CD4-positive, alpha-beta memory T cell (primary cell): ENCODE measurements at regions of chr1 and their contacts with region 1.

Region 1: GRCh38 chr1:40862008-40862863 is at the start of gene CITED4:
- DNase-seq: peak; percentile 95
- H3K4me3 ChIP-seq: peak within 1 kb of the TSS; percentile 57 to 79
- H3K4me3 Mint-ChIP-seq: peak within 1 kb of the TSS; percentile 94 to 99 (median 98)
- H3K27ac ChIP-seq: peak within 1 kb of the TSS; percentile 63
- H3K27ac Mint-ChIP-seq: peak within 1 kb of the TSS; percentile 89 to 99 (median 98)
- H3K4me1 ChIP-seq: peaks cover 14% of the 10 kb centered on the region
- H3K4me1 Mint-ChIP-seq: peaks cover 7 to 15% (median 10%) of the 10 kb centered on the region in 4 donors
- H3K27me3 ChIP-seq: no peaks in the 10 kb centered on the region
- H3K27me3 Mint-ChIP-seq: peaks cover 0 to 4% of the 10 kb centered on the region in 2 donors
- total RNA-seq, gene CITED4: 8.1 to 8.4 TPM

Region 2: DNA sequence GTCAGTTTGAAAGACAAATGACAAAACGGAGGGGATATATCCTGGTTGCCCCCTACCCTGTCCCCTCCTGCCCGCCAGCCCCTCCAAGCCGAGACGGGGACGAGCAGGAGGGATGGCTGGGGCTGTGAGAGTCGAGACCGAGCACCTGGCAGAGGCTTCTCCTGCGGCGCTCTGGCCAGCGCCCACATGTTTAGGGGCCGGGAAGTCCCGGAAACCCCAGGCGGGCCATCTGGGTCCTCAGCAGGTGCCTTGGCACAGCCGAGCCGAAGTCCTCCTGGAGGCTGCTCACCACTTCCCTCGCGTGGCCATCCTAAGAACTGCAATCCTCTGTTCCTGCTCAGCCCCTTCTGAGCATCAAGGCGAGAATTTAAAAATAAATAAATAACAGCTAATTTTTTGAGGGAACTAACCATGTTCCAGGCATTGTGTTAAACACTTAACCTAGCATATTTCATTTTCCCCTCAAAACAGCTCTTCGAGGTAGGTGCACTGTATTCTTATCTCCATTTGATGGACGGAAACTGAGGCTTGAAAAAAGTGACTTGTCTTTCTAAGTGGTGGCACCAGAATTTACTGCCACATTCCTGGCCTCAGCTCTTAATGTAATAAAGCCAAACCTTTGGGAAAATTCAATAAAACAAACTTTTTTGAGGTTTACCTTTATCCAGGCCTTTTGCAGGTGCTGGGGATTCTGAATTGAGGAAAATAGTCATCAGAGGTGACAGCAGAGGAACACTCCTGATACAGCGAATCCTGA is 193.3 kb before region 1 on chr1:
- CTCF ChIA-PET with region 1: interaction called, 3 read pairs
- POLR2A ChIA-PET with region 1: no interaction called
- intact Hi-C with region 1: loop called (anchors 1 kb)
- DNase-seq: peak; percentile 73 to 78 (median 76)
- H3K4me3 ChIP-seq: peak overlapping the region in 1 of 2 donors; percentile 38
- H3K4me3 Mint-ChIP-seq: peak overlapping the region in 6 of 8 donors; percentile 10 to 78 (median 53)
- H3K27ac ChIP-seq: no peak overlapping the region
- H3K27ac Mint-ChIP-seq: no peak overlapping the region
- H3K4me1 ChIP-seq: peaks cover 21% of the 10 kb centered on the region
- H3K4me1 Mint-ChIP-seq: peaks cover 4 to 28% (median 13%) of the 10 kb centered on the region in 4 donors
- H3K27me3 ChIP-seq: no peaks in the 10 kb centered on the region
- H3K27me3 Mint-ChIP-seq: no peaks in the 10 kb centered on the region

Region 3: GRCh38 chr1:40774266-40774998 is 87.8 kb before region 1 on chr1:
- CTCF ChIA-PET with region 1: interaction called, 11 read pairs
- POLR2A ChIA-PET with region 1: interaction called, 5 read pairs
- intact Hi-C with region 1: no loop called
- DNase-seq: peak; percentile 42 to 53 (median 51)
- H3K4me3 ChIP-seq: no peak overlapping the region
- H3K4me3 Mint-ChIP-seq: no peak overlapping the region
- H3K27ac ChIP-seq: no peak overlapping the region
- H3K27ac Mint-ChIP-seq: peak overlapping the region in 1 of 7 donors; percentile 24
- H3K4me1 ChIP-seq: no peaks in the 10 kb centered on the region
- H3K4me1 Mint-ChIP-seq: peaks cover 0 to 2% (median 0%) of the 10 kb centered on the region in 4 donors
- H3K27me3 ChIP-seq: no peaks in the 10 kb centered on the region
- H3K27me3 Mint-ChIP-seq: no peaks in the 10 kb centered on the region

Region 4: DNA sequence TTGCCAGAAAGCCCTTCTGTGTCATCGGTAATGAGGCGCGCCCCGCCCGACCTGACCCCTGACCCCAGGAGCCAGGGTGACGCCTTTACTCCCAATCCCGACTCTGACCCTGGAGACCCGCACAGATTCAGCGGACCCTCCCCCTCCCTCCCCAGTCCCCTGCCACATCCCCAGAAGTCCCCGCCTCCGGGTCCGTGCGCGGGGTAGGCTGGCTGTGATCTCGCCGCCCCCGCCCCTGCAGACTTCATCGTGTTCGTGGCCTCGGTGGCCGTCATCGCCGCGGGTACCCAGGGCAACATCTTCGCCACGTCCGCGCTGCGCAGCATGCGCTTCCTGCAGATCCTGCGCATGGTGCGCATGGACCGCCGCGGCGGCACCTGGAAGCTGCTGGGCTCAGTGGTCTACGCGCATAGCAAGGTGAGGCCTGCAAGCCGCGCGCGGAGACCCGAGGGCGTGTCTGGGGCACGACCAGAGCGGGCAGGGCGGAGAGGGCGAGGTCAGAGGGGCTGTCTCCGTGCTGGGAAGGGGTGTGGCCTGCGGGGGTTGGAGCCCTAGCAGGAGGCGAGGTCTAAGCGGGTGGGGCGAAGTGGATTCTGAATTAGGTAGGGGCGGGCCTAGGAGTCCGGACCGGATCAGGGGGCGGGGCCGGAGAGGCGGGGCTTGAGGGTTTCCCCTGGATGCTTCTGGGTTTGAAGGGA is 43.8 kb before region 1 on chr1:
- CTCF ChIA-PET with region 1: no interaction called
- POLR2A ChIA-PET with region 1: interaction called, 9 read pairs
- intact Hi-C with region 1: loop called (anchors 1 kb)
- DNase-seq: peak; percentile 84 to 95 (median 90)
- H3K4me3 ChIP-seq: peak overlapping the region; percentile 2 to 62
- H3K4me3 Mint-ChIP-seq: peak overlapping the region; percentile 81 to 90 (median 83)
- H3K27ac ChIP-seq: peak overlapping the region; percentile 28
- H3K27ac Mint-ChIP-seq: peak overlapping the region; percentile 78 to 90 (median 83)
- H3K4me1 ChIP-seq: peaks cover 10% of the 10 kb centered on the region
- H3K4me1 Mint-ChIP-seq: peaks cover 0 to 15% (median 9%) of the 10 kb centered on the region in 4 donors
- H3K27me3 ChIP-seq: no peaks in the 10 kb centered on the region
- H3K27me3 Mint-ChIP-seq: no peaks in the 10 kb centered on the region

Region 5: DNA sequence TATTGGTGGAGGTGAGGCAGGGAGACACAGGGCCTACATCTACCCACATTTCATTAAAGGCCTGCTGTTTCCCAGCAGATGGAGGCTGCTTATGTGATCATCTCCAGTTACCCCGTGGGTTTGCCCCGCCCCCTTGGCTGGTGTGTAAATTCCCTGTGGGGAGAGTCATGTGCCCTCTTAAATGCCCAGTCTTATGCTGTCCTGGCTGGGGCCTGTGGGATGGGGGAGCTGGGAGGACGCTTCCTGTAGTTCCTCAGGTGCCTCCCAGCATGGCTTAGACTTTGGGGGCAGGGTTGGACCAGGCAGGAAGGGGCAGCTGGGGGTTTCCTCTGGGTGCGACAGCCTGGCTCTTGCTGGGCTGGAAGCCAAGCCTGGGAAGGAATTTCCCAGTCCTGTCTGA is 15.5 kb after region 1 on chr1:
- CTCF ChIA-PET with region 1: interaction called, 3 read pairs
- POLR2A ChIA-PET with region 1: interaction called, 46 read pairs
- intact Hi-C with region 1: loop called (anchors 1 kb)
- DNase-seq: no peak
- H3K4me3 ChIP-seq: no peak overlapping the region
- H3K4me3 Mint-ChIP-seq: no peak overlapping the region
- H3K27ac ChIP-seq: no peak overlapping the region
- H3K27ac Mint-ChIP-seq: peak overlapping the region in 1 of 7 donors; percentile 42
- H3K4me1 ChIP-seq: peaks cover 31% of the 10 kb centered on the region
- H3K4me1 Mint-ChIP-seq: peaks cover 23 to 40% (median 31%) of the 10 kb centered on the region in 4 donors
- H3K27me3 ChIP-seq: no peaks in the 10 kb centered on the region
- H3K27me3 Mint-ChIP-seq: peaks cover 2 to 7% of the 10 kb centered on the region in 2 donors

Region 6: GRCh38 chr1:40979233-40980067 is 117.2 kb after region 1 on chr1 and contains the start of gene CTPS1:
- CTCF ChIA-PET with region 1: no interaction called
- POLR2A ChIA-PET with region 1: interaction called, 16 read pairs
- intact Hi-C with region 1: no loop called
- DNase-seq: peak; percentile 94 to 96 (median 95)
- H3K4me3 ChIP-seq: peak within 1 kb of the TSS; percentile 45 to 80
- H3K4me3 Mint-ChIP-seq: peak within 1 kb of the TSS; percentile 83 to 97 (median 90)
- H3K27ac ChIP-seq: peak within 1 kb of the TSS; percentile 81
- H3K27ac Mint-ChIP-seq: peak within 1 kb of the TSS; percentile 88 to 98 (median 92)
- H3K4me1 ChIP-seq: peaks cover 25% of the 10 kb centered on the region
- H3K4me1 Mint-ChIP-seq: peaks cover 17 to 31% (median 22%) of the 10 kb centered on the region in 4 donors
- H3K27me3 ChIP-seq: no peaks in the 10 kb centered on the region
- H3K27me3 Mint-ChIP-seq: no peaks in the 10 kb centered on the region
- total RNA-seq, gene CTPS1: 18.5 to 19.7 TPM

Region 7: GRCh38 chr1:41241782-41242341 is 379.6 kb after region 1 on chr1 and contains the start of gene SCMH1:
- CTCF ChIA-PET with region 1: no interaction called
- POLR2A ChIA-PET with region 1: no interaction called
- intact Hi-C with region 1: loop called (anchors 5 kb)
- DNase-seq: peak; percentile 50 to 69 (median 58)
- H3K4me3 ChIP-seq: peak within 1 kb of the TSS; percentile 31 to 51
- H3K4me3 Mint-ChIP-seq: peak within 1 kb of the TSS; percentile 84 to 91 (median 89)
- H3K27ac ChIP-seq: peak within 1 kb of the TSS; percentile 51
- H3K27ac Mint-ChIP-seq: peak within 1 kb of the TSS; percentile 86 to 95 (median 92)
- H3K4me1 ChIP-seq: peaks cover 20% of the 10 kb centered on the region
- H3K4me1 Mint-ChIP-seq: peaks cover 15 to 24% (median 20%) of the 10 kb centered on the region in 4 donors
- H3K27me3 ChIP-seq: no peaks in the 10 kb centered on the region
- H3K27me3 Mint-ChIP-seq: no peaks in the 10 kb centered on the region
- total RNA-seq, gene SCMH1: 19.7 to 27.3 TPM